ENCODE measurements at regions of chr10 and their contacts with region 1.

Region 1: DNA sequence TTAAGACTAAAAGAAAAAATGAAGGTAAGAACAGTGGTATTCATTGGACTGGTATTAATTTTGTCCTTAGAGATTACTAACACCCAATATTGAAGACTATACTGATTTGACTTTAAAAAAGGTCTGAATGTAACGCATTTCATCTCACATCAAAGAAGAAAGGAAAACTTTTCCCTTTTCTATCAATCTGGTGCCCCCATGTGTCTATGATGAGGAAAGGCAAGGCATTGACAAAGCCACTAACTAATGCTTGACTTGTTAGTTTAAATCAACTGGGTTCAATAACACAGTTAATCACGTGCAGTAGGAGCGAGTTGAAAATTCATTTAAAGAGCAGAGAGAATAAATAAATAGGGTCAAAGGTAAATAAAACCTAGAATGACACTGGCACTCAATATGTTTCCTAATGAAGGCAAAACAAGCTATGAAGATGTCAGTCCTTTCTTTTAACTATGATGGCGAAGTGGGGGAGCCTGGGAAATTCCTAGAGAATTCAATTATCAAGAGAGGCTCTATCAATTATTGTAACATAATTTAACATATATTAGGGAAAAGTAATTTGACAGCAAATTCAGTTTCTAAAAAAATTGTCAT is 180.9 kb downstream of the ANK3 start:
- DNase-seq: no peak
- H3K4me3 ChIP-seq: no peak overlapping the region
- H3K27ac ChIP-seq: no peak overlapping the region
- H3K4me1 ChIP-seq: no peaks in the 10 kb centered on the region
- H3K27me3 ChIP-seq: no peaks in the 10 kb centered on the region
- CTCF ChIP-seq: peak; percentile 37 to 77 (median 69)
- POLR2A ChIP-seq: no peak

Region 2: GRCh38 chr10:60099998-60100747 is 108.6 kb before region 1 on chr10:
- intact Hi-C with region 1: loop called in 1 of 2 experiments (anchors 5 kb)
- DNase-seq: peak in 1 of 7 donors; percentile 11
- H3K4me3 ChIP-seq: no peak overlapping the region
- H3K27ac ChIP-seq: no peak overlapping the region
- H3K4me1 ChIP-seq: no peaks in the 10 kb centered on the region
- H3K27me3 ChIP-seq: no peaks in the 10 kb centered on the region
- CTCF ChIP-seq: peak; percentile 42 to 70 (median 62)
- POLR2A ChIP-seq: no peak

Region 3: DNA sequence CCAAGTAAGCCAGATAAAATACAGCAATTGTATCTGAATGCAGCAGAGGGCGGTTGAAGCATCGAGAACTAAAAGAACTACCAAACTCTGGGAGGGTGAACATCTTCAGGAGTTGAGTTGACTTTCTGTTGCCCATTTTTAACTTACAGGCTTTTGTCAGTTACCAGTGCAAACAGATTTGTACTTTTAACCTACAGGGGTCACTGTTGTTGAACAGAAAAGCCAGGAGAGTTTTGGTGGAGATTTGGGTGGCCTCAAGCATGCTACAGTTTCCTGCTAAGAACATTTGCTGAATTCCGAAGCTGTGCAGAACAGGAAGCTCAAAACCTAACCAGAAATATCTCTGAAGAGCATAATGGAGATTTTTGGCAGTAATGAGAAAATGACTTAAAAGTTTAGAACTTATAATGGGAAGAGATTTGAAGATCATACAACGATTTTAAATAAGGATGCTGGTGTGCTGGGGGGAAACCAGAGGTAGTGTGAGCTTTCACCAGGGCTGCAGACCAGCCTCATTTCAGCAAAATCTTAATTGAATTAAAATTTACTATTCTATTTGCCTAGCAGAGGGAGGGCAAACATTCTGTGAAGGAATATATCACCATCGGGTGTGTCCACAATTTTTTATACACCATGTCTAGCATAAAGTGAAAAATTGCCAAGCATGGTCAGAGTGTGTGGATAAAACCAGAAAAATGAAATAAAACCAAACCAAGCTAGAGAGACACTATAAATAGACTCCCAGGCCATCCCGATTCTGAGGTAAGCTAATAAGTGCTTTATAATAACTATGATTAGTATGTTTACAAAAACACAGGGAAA is 93.8 kb before region 1 on chr10:
- intact Hi-C with region 1: loop called (anchors 5 to 10 kb)
- DNase-seq: peak in 1 of 7 donors; percentile 15
- H3K4me3 ChIP-seq: no peak overlapping the region
- H3K27ac ChIP-seq: no peak overlapping the region
- H3K4me1 ChIP-seq: no peaks in the 10 kb centered on the region
- H3K27me3 ChIP-seq: no peaks in the 10 kb centered on the region
- CTCF ChIP-seq: peak; percentile 29 to 58 (median 47)
- POLR2A ChIP-seq: no peak

Measured in adrenal gland (tissue), 19 donors.